Activated CD8-positive, alpha-beta T cell treated with anti-CD3 and anti-CD28 coated beads for 36 hours (primary cell): ENCODE measurements at regions of chr10 and their contacts with region 1.

Region 1: DNA sequence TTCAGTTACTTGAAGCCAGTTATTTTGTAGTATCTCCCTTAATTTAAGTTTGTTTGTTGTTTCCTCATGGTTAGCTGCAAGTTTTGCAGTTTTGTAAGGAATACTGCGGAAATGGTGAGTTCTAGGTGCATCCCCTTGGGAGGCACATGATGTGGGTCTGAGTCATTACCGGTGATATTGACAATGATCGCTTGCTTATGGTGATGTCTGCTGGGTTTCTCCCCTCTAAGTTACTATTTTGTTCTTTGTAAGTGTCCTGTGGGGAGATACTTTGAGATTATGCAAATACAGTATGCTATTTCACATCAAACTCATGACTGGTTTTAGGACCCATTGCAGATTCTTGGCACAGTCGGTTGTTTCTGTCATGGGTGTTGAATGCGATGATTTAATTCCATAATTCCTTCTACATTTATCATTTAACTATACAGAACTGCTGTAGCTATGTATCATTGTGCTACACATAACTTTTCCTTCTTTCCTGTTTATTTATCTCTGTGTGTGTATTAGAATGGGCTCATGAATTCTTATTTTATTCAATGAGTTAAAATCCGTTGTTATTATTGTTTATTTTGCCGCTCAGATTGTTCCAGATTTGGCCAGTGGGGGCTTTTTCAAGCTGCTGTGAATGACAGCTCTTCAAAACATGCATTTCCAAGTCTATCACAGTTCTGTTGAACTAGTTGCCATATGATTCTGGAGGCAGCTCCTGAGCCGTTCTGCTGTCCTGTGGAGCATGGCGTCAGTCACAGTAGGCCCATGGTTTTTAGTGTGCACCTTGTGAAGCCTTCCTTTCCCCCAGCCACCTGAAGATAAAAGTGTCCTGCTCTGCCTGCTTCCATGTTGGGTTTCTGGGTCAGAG is 18.4 kb downstream of the TSPAN14 start:
- DNase-seq: peak; percentile 72
- ATAC-seq: peak; percentile 70
- H3K4me3 Mint-ChIP-seq: peak overlapping the region; percentile 39
- H3K27ac Mint-ChIP-seq: peak overlapping the region; percentile 88
- H3K4me1 Mint-ChIP-seq: peaks cover 85% of the 10 kb centered on the region
- H3K27me3 Mint-ChIP-seq: no peaks in the 10 kb centered on the region
- CTCF ChIP-seq: no peak

Region 2: DNA sequence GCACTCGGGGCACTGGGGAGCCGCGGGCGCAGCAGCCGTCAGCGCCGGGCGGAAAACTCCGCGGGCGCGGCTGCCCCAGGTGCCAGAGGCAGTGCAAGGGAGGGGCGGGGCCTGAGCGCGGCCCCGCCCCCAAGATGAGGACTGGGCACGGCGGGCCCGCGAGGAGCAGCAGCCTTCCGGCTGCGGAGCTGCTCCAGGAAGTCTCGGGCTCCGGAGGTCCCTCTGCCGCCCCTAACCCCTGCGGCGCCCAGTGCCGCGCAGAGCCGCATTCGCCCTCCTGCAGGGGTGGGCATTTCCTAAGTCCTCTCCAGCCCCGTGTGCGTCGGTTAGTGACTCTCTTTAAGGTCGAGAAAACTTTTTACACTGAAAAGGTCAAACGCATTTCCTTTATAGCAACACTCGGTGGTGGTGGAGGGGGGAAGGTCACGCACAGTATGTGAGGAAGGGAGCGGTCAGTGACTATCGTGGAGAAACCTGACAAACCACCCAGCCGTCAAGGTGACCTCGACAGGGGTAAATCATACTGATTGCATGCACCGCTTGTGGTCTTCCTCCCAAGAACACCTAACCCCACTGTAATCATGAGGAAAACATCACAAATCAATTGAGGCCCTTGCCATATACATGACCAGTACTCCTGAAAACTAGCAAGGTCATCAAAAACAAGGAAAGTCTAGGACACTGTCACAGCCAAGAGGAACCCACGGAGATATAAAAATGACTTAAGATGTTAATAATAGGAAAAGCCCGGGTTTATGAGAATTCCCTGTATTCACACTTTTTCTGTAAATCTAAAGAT is 266.8 kb before region 1 on chr10 and contains the start of gene ANXA11:
- CTCF ChIA-PET with region 1: interaction called, 4 read pairs
- POLR2A ChIA-PET with region 1: no interaction called
- intact Hi-C with region 1: loop called (anchors 10 kb)
- DNase-seq: peak; percentile 87
- ATAC-seq: peak; percentile 70
- H3K4me3 Mint-ChIP-seq: peak within 1 kb of the TSS; percentile 92
- H3K27ac Mint-ChIP-seq: peak within 1 kb of the TSS; percentile 98
- H3K4me1 Mint-ChIP-seq: peaks cover 44% of the 10 kb centered on the region
- H3K27me3 Mint-ChIP-seq: no peaks in the 10 kb centered on the region
- CTCF ChIP-seq: no peak
- total RNA-seq, gene ANXA11: 226 to 238 TPM

Region 3: DNA sequence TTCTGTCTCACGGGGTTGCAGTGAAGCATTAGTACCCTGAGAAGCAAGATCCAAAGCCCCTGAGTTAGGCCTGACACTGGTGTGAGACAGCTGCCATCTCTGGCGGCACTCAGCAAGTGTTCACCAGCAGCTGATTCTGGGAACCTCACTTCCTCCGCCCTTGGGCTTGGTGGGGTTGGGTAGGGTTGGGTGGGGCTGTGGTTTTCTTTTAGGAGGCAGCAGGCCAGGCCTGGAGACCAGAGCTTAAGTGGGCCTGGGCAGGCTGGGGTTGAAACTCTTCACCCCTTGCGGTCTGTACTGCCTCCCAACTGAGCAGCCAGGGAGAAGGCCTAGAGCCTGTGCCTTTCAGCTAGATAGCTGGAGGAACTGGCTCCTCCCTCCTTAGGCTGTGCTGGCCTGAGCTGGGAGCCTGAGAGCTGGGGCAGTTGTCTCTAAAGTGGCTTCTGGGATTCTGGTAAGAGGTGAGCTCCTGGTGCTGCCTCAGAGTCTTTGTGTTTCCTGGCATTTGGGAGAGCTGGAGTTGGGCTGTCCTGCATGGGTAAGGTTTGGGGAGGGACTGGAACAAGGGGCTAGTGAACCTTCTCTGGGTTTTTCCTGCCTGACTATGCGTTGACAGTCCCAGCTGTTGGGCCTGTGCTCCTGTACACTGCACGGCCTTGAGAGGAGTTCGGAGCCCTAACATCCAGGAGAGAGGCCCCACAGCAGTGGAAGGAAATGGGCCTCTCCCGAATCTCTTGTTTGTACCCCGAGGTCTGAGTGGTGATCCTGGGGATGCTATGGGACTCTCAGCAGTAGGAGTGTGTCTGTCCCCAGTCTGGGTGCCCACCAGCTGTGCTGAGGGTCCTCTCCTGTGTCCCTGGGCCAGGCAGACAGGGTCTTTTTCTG is 13.2 kb before region 1 on chr10:
- CTCF ChIA-PET with region 1: interaction called, 72 read pairs
- POLR2A ChIA-PET with region 1: interaction called, 70 read pairs
- intact Hi-C with region 1: loop called (anchors 1 kb)
- DNase-seq: peak; percentile 90
- ATAC-seq: peak; percentile 60
- H3K4me3 Mint-ChIP-seq: peak overlapping the region; percentile 86
- H3K27ac Mint-ChIP-seq: peak overlapping the region; percentile 95
- H3K4me1 Mint-ChIP-seq: peaks cover 78% of the 10 kb centered on the region
- H3K27me3 Mint-ChIP-seq: no peaks in the 10 kb centered on the region
- CTCF ChIP-seq: no peak

Region 4: DNA sequence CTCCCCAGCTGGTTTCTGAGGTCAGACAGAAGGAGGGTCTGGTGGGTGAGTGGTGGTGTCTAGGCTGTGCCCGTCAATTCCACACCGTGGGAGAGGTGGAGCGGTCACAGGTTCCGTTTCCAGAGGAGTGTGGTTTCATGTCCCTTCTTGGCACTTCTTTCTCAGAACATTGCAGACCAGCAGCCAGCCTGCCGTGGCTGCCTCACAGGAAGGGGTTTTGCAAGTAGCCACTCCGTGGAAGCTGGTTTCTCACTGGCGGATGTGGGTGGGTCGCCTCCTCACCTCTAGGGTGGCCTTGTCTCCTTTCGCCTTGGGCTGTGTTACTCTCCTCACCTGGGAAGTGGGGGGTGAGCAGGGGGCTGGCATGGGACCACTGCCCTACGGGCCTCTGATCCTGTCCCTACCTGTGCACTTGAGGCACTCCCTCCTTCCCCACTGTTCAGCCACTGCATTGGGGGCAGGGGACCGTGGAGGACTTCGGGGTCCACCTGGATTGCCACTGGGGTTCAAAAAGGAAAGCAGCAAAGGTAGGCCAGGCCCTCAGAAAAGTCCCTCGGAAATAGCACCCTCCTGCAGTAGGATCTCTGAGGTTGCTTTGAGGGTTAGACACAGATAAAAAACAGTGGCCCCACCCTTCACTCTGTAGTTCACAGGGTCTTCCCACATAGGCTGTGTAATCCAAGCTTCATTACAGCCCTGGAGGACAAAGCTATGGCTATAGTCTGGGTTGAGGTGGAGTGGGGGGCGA is 15.5 kb after region 1 on chr10:
- CTCF ChIA-PET with region 1: interaction called, 74 read pairs
- POLR2A ChIA-PET with region 1: interaction called, 223 read pairs
- intact Hi-C with region 1: no loop called
- DNase-seq: peak; percentile 79
- ATAC-seq: peak; percentile 50
- H3K4me3 Mint-ChIP-seq: peak overlapping the region; percentile 40
- H3K27ac Mint-ChIP-seq: peak overlapping the region; percentile 91
- H3K4me1 Mint-ChIP-seq: peaks cover 93% of the 10 kb centered on the region
- H3K27me3 Mint-ChIP-seq: no peaks in the 10 kb centered on the region
- CTCF ChIP-seq: no peak

Region 5: GRCh38 chr10:80493522-80494051 is 21.1 kb after region 1 on chr10:
- CTCF ChIA-PET with region 1: interaction called, 1,114 read pairs
- POLR2A ChIA-PET with region 1: interaction called, 223 read pairs
- intact Hi-C with region 1: no loop called
- DNase-seq: peak; percentile 27
- ATAC-seq: peak; percentile 60
- H3K4me3 Mint-ChIP-seq: peak overlapping the region; percentile 46
- H3K27ac Mint-ChIP-seq: peak overlapping the region; percentile 92
- H3K4me1 Mint-ChIP-seq: peaks cover 96% of the 10 kb centered on the region
- H3K27me3 Mint-ChIP-seq: no peaks in the 10 kb centered on the region
- CTCF ChIP-seq: no peak